H1 (cell line): ENCODE measurements at regions of chr6 and their contacts with region 1.

Region 1: GRCh38 chr6:136643850-136644596 is 93.8 kb upstream of the MAP7 start:
- DNase-seq: peak; percentile 64 to 96
- H3K4me3 ChIP-seq: no peak overlapping the region
- H3K27ac ChIP-seq: no peak overlapping the region
- H3K4me1 ChIP-seq: peaks cover 0 to 8% (median 1%) of the 10 kb centered on the region in 4 experiments; a peak in 2 of 7 replicates
- H3K27me3 ChIP-seq: no peaks in the 10 kb centered on the region
- CTCF ChIP-seq: peak; percentile 87 to 98 (median 95)
- EP300 ChIP-seq: no peak; a peak in 1 of 3 replicates
- POLR2A ChIP-seq: no peak
- RAD21 ChIP-seq: peak; percentile 93 to 98

Region 2: DNA sequence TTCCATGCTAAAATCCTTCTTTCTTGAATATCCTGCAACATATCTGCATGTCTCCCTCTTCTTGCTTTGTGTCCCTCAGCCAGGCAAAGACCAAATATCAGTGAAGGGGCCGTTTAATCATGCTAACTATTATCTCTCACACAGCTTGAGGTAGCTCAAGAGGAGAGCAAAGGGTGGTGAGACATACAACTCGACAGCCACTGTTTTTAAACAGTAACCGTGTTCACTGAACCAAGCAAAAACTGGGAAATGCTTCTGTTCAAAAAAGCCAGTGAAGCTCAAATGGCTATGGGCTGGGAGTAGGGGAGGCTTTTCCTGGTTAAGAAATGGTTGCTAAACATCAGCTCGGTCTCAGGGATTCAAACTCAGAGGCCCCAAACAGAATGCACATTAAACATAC is 177.2 kb before region 1 on chr6:
- CTCF ChIA-PET with region 1: no interaction called
- POLR2A ChIA-PET with region 1: no interaction called
- DNase-seq: no peak
- H3K4me3 ChIP-seq: no peak overlapping the region
- H3K27ac ChIP-seq: 0 out of 2 replicates have a peak overlapping the region, but pooled peaks have one; percentile 12
- H3K4me1 ChIP-seq: peaks cover 0 to 16% (median 9%) of the 10 kb centered on the region in 4 experiments; a peak in 5 of 7 replicates
- H3K27me3 ChIP-seq: no peaks in the 10 kb centered on the region
- CTCF ChIP-seq: no peak
- EP300 ChIP-seq: no peak
- POLR2A ChIP-seq: no peak
- RAD21 ChIP-seq: no peak

Region 3: DNA sequence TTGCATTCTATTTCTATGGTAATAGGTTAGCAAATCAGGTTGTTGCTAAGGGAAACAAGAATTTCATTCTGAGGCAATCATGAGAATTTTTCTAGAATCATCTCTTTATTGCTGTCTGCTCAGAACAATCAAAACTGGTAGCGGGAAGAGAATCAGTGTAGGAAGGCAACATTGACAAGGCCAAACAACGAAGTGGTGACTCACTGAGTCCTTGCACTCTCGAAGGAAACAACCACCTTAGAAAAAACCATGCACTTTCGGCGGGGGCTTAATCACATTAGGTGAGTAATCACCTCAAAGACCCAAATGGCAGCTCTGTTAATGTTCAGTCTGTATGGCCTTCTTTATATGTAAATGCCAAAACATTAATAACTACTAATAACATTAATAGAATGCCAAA is 15.0 kb before region 1 on chr6:
- CTCF ChIA-PET with region 1: interaction called, 57 read pairs
- POLR2A ChIA-PET with region 1: no interaction called
- DNase-seq: no peak
- H3K4me3 ChIP-seq: no peak overlapping the region
- H3K27ac ChIP-seq: no peak overlapping the region
- H3K4me1 ChIP-seq: no peaks in the 10 kb centered on the region
- H3K27me3 ChIP-seq: no peaks in the 10 kb centered on the region
- CTCF ChIP-seq: no peak
- EP300 ChIP-seq: no peak
- POLR2A ChIP-seq: no peak
- RAD21 ChIP-seq: no peak

Region 4: DNA sequence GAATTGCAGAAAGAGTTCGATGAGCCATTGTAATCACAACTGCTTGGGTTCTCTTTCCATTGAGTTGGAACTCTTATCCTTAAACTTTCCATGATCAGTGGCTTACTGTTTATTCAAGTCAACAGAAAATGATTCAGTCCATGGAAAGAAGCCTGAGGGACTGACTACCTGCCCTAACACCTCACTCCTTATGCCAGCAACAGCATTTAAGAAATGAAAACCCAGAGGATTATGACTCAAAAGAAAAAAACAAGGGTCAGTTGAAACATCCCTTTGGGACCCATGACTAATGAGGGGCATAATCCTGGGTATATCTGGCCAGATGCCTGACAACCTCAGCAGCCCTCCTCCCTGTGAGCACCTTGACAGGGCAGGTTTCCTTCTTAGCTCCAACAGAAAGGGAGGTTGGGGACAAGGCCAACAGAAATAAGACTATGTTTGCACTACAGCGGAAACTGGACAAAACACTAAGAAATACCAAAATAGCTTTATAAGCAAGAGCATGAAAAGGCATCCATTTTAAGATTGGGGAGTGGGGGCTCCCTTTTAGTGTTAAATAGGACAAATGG is 41.6 kb after region 1 on chr6:
- CTCF ChIA-PET with region 1: interaction called, 14 read pairs
- POLR2A ChIA-PET with region 1: no interaction called
- DNase-seq: no peak
- H3K4me3 ChIP-seq: no peak overlapping the region
- H3K27ac ChIP-seq: no peak overlapping the region
- H3K4me1 ChIP-seq: no peaks in the 10 kb centered on the region
- H3K27me3 ChIP-seq: no peaks in the 10 kb centered on the region
- CTCF ChIP-seq: no peak
- EP300 ChIP-seq: no peak
- POLR2A ChIP-seq: no peak
- RAD21 ChIP-seq: no peak

Region 5: GRCh38 chr6:136792410-136793262 is 148.6 kb after region 1 on chr6 and contains the start of gene MAP3K5:
- CTCF ChIA-PET with region 1: interaction called, 99 read pairs
- POLR2A ChIA-PET with region 1: interaction called, 6 read pairs
- DNase-seq: peak in 1 of 2 experiments; percentile 93
- H3K4me3 ChIP-seq: peak within 1 kb of the TSS; percentile 42 to 78 (median 70)
- H3K27ac ChIP-seq: no peak within 1 kb of the TSS
- H3K4me1 ChIP-seq: 0 out of 7 replicates have a peak, but pooled peaks cover 0 to 9% (median 1%) of the 10 kb centered on the region in 4 experiments
- H3K27me3 ChIP-seq: peaks cover 8 to 31% (median 19%) of the 10 kb centered on the region in 4 experiments; a peak in 6 of 7 replicates
- CTCF ChIP-seq: peak; percentile 80 to 85 (median 82)
- EP300 ChIP-seq: no peak
- POLR2A ChIP-seq: no peak
- RAD21 ChIP-seq: peak; percentile 87 to 94
- total RNA-seq, gene MAP3K5: 2.4 and 2.6 TPM in 2 replicates

Region 6: GRCh38 chr6:136921936-136922684 is 278.1 kb after region 1 on chr6 and contains the start of gene SLC35D3:
- CTCF ChIA-PET with region 1: interaction called, 19 read pairs
- POLR2A ChIA-PET with region 1: no interaction called
- DNase-seq: peak in 1 of 2 experiments; percentile 73
- H3K4me3 ChIP-seq: peak within 1 kb of the TSS; percentile 37 to 60 (median 48)
- H3K27ac ChIP-seq: no peak within 1 kb of the TSS
- H3K4me1 ChIP-seq: peaks cover 0 to 12% (median 10%) of the 10 kb centered on the region in 4 experiments; a peak in 5 of 7 replicates
- H3K27me3 ChIP-seq: peaks cover 30 to 53% (median 52%) of the 10 kb centered on the region in 4 experiments
- CTCF ChIP-seq: no peak
- EP300 ChIP-seq: no peak
- POLR2A ChIP-seq: no peak
- RAD21 ChIP-seq: no peak
- total RNA-seq, gene SLC35D3: 0.39 and 0.57 TPM in 2 replicates